ENCODE measurements at regions of chr1 and their contacts with region 1.

Region 1: GRCh38 chr1:160078512-160079195 is 2.7 kb upstream of the KCNJ9 start:
- DNase-seq: peak in 7 of 10 donors; percentile 55 to 96 (median 83)

Region 2: GRCh38 chr1:160046494-160047110 is 32.1 kb before region 1 on chr1:
- intact Hi-C with region 1: loop called (anchors 2 kb)
- DNase-seq: peak; percentile 76 to 98 (median 86)